ENCODE measurements at regions of chr6 and their contacts with region 1.

Region 1: GRCh38 chr6:73388800-73389512 is 5.7 kb upstream of the DDX43 start:
- DNase-seq: peak; percentile 76
- CTCF ChIP-seq: peak; percentile 72

Region 2: DNA sequence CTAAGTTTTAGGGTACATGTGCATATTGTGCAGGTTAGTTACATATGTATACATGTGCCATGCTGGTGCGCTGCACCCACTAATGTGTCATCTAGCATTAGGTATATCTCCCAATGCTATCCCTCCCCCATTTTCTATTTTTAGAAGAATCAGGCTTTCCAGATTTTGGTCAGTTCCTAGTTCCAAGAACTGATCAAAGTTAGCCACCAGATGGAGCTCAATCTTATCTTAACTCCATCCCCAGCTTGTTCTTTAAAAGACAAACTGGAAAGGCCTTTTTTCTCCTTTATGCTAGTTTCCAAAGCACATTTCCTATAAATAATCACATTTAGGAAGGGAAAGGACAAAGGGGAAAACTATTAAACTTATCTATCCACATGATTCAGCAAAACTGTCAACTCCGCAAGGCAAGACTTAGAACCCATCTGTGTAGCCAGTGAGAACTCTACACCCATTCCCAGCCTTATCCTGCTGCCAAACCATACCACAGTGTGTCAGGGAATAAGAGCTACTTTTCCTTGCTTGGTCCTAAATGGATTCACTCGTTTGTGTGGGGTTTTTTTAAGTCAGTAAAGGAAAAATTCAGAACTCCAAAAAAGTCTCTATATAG is 103.2 kb before region 1 on chr6:
- CTCF ChIA-PET with region 1: interaction called, 16 read pairs
- POLR2A ChIA-PET with region 1: no interaction called
- DNase-seq: no peak
- CTCF ChIP-seq: peak; percentile 39